ENCODE measurements at regions of chr19 and their contacts with region 1.

Region 1: GRCh38 chr19:4197625-4198466 is 15.4 kb downstream of the ANKRD24 start:
- DNase-seq: peak; percentile 39 to 55
- ATAC-seq: peak; percentile 49 to 55; a peak in 2 of 6 replicates
- H3K4me3 ChIP-seq: peak overlapping the region; percentile 43
- H3K27ac ChIP-seq: peak overlapping the region in 1 of 2 experiments; percentile 53; a peak in 1 of 6 replicates
- H3K4me1 ChIP-seq: peaks cover 15% of the 10 kb centered on the region; the same call in 2 of the 3 replicates
- CTCF ChIP-seq: no peak
- EP300 ChIP-seq: no peak
- POLR2A ChIP-seq: no peak
- RAD21 ChIP-seq: no peak

Region 2: GRCh38 chr19:3984908-3985642 is 212.8 kb before region 1 on chr19 and contains the start of gene EEF2:
- CTCF ChIA-PET with region 1: interaction called, 17 read pairs
- POLR2A ChIA-PET with region 1: interaction called, 5 read pairs
- DNase-seq: peak; percentile 60 to 85
- ATAC-seq: peak; percentile 25 to 49; a peak in 4 of 6 replicates
- H3K4me3 ChIP-seq: peak within 1 kb of the TSS; percentile 96
- H3K27ac ChIP-seq: peak within 1 kb of the TSS; percentile 83 to 97
- H3K4me1 ChIP-seq: peaks cover 26% of the 10 kb centered on the region; the same call in 2 of the 3 replicates
- CTCF ChIP-seq: no peak
- EP300 ChIP-seq: no peak
- POLR2A ChIP-seq: peak; percentile 98
- RAD21 ChIP-seq: no peak
- polyA plus RNA-seq, gene EEF2: 526 and 680 TPM in 2 replicates

Region 3: GRCh38 chr19:4172861-4173473 is 24.9 kb before region 1 on chr19:
- CTCF ChIA-PET with region 1: interaction called, 12 read pairs
- POLR2A ChIA-PET with region 1: no interaction called
- DNase-seq: peak in 1 of 2 experiments; percentile 17
- ATAC-seq: peak; percentile 86 to 87
- H3K4me3 ChIP-seq: no peak overlapping the region
- H3K27ac ChIP-seq: no peak overlapping the region
- H3K4me1 ChIP-seq: peaks cover 8% of the 10 kb centered on the region; the same call in 2 of the 3 replicates
- CTCF ChIP-seq: no peak
- EP300 ChIP-seq: no peak
- POLR2A ChIP-seq: no peak
- RAD21 ChIP-seq: no peak

Region 4: GRCh38 chr19:4187313-4188122 is 10.3 kb before region 1 on chr19:
- CTCF ChIA-PET with region 1: interaction called, 13 read pairs
- POLR2A ChIA-PET with region 1: no interaction called
- DNase-seq: no peak
- ATAC-seq: no peak
- H3K4me3 ChIP-seq: no peak overlapping the region
- H3K27ac ChIP-seq: no peak overlapping the region
- H3K4me1 ChIP-seq: peaks cover 3% of the 10 kb centered on the region; the same call in 1 of the 3 replicates
- CTCF ChIP-seq: no peak
- EP300 ChIP-seq: no peak
- POLR2A ChIP-seq: no peak
- RAD21 ChIP-seq: no peak

Measured in A549 (cell line).